PC-3 (cell line): ENCODE measurements at regions of chr7 and their contacts with region 1.

Region 1: GRCh38 chr7:81934596-81935301 is 164.9 kb upstream of the HGF start:
- DNase-seq: no peak
- ATAC-seq: no peak
- H3K4me3 ChIP-seq: no peak overlapping the region
- H3K27ac ChIP-seq: no peak overlapping the region
- H3K4me1 ChIP-seq: no peaks in the 10 kb centered on the region
- H3K27me3 ChIP-seq: 0 out of 2 replicates have a peak, but pooled peaks cover 1% of the 10 kb centered on the region
- CTCF ChIP-seq: no peak

Region 2: DNA sequence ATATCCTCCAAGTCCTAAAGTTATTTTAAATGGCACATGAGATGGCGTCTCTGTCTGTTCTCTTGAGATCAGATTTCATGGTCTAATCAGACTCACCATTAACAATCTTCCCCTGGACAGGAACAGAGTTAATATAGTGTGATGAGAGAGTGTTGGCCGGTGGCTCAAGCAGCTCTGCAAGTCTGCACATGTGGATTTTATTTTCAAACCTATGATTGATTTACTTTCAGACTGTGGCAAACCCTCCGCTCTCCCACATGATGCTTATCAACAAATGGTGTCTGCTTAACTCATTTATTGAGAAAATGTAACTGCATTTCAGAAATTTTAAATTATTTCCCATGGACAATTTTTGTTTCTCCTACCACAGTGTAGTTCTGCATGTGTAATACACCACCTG is 118.4 kb before region 1 on chr7:
- CTCF ChIA-PET with region 1: no interaction called
- POLR2A ChIA-PET with region 1: no interaction called
- intact Hi-C with region 1: no loop called
- DNase-seq: no peak
- ATAC-seq: no peak
- H3K4me3 ChIP-seq: no peak overlapping the region
- H3K27ac ChIP-seq: no peak overlapping the region
- H3K4me1 ChIP-seq: no peaks in the 10 kb centered on the region
- H3K27me3 ChIP-seq: no peaks in the 10 kb centered on the region
- CTCF ChIP-seq: no peak

Region 3: GRCh38 chr7:81973117-81973516 is 38.4 kb after region 1 on chr7:
- CTCF ChIA-PET with region 1: no interaction called
- POLR2A ChIA-PET with region 1: no interaction called
- intact Hi-C with region 1: loop called (anchors 2 kb)
- DNase-seq: no peak
- ATAC-seq: no peak
- H3K4me3 ChIP-seq: no peak overlapping the region
- H3K27ac ChIP-seq: no peak overlapping the region
- H3K4me1 ChIP-seq: no peaks in the 10 kb centered on the region
- H3K27me3 ChIP-seq: 0 out of 2 replicates have a peak, but pooled peaks cover 6% of the 10 kb centered on the region
- CTCF ChIP-seq: no peak